ENCODE measurements at regions of chr15 and their contacts with region 1.

Region 1: GRCh38 chr15:78540141-78540928 is at the start of gene PSMA4:
- DNase-seq: peak; percentile 86 to 98 (median 95)
- ATAC-seq: peak; percentile 83
- H3K4me3 ChIP-seq: peak within 1 kb of the TSS; percentile 85 to 96
- H3K4me3 Mint-ChIP-seq: peak within 1 kb of the TSS; percentile 88
- H3K27ac ChIP-seq: peak within 1 kb of the TSS; percentile 89 to 97
- H3K27ac Mint-ChIP-seq: peak within 1 kb of the TSS; percentile 95
- H3K4me1 ChIP-seq: peaks cover 28% of the 10 kb centered on the region
- H3K4me1 Mint-ChIP-seq: peaks cover 31% of the 10 kb centered on the region
- H3K27me3 ChIP-seq: no peaks in the 10 kb centered on the region
- H3K27me3 Mint-ChIP-seq: no peaks in the 10 kb centered on the region
- CTCF ChIP-seq: no peak
- total RNA-seq, gene PSMA4: 72.8 to 79.4 TPM

Region 2: GRCh38 chr15:78299101-78299930 is 241.0 kb before region 1 on chr15 and contains the start of gene SKIC8:
- CTCF ChIA-PET with region 1: no interaction called
- POLR2A ChIA-PET with region 1: interaction called, 3 read pairs
- intact Hi-C with region 1: loop called (anchors 1 to 2 kb)
- DNase-seq: peak; percentile 80 to 95 (median 89)
- ATAC-seq: peak; percentile 98
- H3K4me3 ChIP-seq: peak within 1 kb of the TSS; percentile 89 to 99
- H3K4me3 Mint-ChIP-seq: peak within 1 kb of the TSS; percentile 98
- H3K27ac ChIP-seq: peak within 1 kb of the TSS; percentile 73 to 84
- H3K27ac Mint-ChIP-seq: peak within 1 kb of the TSS; percentile 96
- H3K4me1 ChIP-seq: peaks cover 12% of the 10 kb centered on the region
- H3K4me1 Mint-ChIP-seq: peaks cover 34% of the 10 kb centered on the region
- H3K27me3 ChIP-seq: no peaks in the 10 kb centered on the region
- H3K27me3 Mint-ChIP-seq: no peaks in the 10 kb centered on the region
- CTCF ChIP-seq: no peak
- total RNA-seq, gene SKIC8: 18.4 to 21.2 TPM

Region 3: DNA sequence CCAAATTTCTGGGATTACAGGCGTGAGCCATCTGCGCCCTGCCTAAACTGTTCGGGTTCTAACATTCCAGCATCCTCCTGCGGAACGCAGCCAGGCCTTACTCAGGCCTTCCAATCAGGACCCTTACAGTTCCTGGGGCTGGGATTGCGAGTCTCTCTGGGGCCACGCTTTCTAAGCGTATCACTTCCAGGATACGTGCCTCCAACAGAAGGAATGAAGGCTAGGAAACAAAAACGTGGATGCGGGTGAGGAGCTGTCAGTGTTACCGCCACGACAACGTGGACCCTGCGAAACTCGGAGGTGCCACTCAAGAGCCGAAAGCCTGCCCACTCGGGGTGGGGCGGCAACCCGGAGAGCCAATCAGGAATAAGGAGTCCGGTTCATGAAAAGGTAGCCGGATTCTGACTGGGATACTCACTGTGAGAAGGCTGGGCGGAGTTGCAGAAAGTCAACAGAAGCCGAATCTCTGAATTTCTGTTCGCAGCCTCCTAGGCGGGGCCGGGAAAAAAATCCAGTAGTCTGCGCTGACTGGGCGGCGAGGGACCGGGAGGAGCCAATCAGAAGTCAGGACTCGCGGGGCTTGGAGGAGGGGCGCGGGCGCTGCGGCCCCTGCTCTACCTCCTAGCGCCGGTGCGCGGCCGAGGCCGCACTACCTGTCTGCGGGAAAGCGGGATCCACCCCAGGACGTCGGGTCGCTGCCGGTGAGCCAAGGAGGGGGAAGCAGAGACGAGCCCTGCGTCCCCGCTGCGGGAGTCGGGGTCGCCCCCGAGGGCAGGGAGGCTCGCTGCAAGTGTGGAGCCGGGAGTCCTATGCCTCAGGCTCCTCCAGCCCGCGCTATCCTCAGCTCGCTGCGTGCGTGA is 33.1 kb before region 1 on chr15 and contains the start of gene HYKK:
- CTCF ChIA-PET with region 1: no interaction called
- POLR2A ChIA-PET with region 1: interaction called, 16 read pairs
- intact Hi-C with region 1: loop called (anchors 1 kb)
- DNase-seq: peak; percentile 18 to 82 (median 69)
- ATAC-seq: peak; percentile 89
- H3K4me3 ChIP-seq: peak within 1 kb of the TSS; percentile 60 to 70
- H3K4me3 Mint-ChIP-seq: peak within 1 kb of the TSS; percentile 88
- H3K27ac ChIP-seq: no peak within 1 kb of the TSS
- H3K27ac Mint-ChIP-seq: peak within 1 kb of the TSS; percentile 55
- H3K4me1 ChIP-seq: peaks cover 15% of the 10 kb centered on the region
- H3K4me1 Mint-ChIP-seq: peaks cover 29% of the 10 kb centered on the region
- H3K27me3 ChIP-seq: peaks cover 0 to 3% of the 10 kb centered on the region in 2 experiments
- H3K27me3 Mint-ChIP-seq: no peaks in the 10 kb centered on the region
- CTCF ChIP-seq: no peak
- total RNA-seq, gene HYKK: 1.6 to 2.3 TPM

Region 4: DNA sequence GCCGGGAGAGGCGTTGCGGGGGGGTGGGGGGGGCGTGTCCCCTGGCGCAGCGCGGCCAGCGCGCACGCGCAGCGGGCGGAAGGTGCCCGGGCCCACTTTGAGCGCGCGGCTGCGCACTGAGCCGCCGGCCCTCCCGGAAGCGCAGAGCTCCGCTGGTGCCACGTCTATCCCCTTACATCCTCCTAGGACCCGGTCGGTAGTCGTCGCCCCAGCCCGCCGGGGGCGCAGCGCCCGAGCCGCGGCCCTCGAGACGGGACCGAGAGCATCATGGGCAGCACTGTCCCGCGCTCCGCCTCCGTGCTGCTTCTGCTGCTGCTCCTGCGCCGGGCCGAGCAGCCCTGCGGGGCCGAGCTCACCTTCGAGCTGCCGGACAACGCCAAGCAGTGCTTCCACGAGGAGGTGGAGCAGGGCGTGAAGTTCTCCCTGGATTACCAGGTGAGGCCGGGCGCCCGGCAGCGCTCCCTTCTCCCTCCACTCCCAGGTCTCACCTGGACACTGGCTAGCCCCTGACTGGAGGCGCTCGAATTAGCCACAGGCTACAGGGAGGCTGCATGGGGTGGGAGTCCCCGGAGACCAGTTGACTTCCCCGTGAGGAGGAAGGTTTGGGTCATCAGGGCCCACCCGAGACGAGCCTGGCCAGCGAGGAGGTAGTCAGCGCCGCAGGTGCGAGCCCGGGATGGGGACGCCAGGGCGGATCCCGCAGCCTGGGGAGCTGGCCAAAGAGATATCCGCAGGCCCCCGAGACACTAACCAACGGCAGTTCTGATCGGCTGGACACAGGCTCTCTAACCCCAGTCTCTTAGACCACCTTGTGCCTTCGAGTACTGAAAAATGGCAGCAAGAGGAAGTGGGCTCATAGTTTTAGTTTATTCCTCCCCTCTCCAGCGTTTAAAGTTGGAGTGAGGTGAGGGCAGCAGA is 770.9 kb after region 1 on chr15 and contains the start of gene TMED3:
- CTCF ChIA-PET with region 1: no interaction called
- POLR2A ChIA-PET with region 1: no interaction called
- intact Hi-C with region 1: loop called in 1 of 2 experiments (anchors 10 kb)
- DNase-seq: peak; percentile 56 to 92 (median 75)
- ATAC-seq: peak; percentile 95
- H3K4me3 ChIP-seq: peak within 1 kb of the TSS; percentile 83 to 88
- H3K4me3 Mint-ChIP-seq: peak within 1 kb of the TSS; percentile 89
- H3K27ac ChIP-seq: peak within 1 kb of the TSS in 1 of 2 experiments; percentile 47
- H3K27ac Mint-ChIP-seq: peak within 1 kb of the TSS; percentile 22
- H3K4me1 ChIP-seq: peaks cover 19% of the 10 kb centered on the region
- H3K4me1 Mint-ChIP-seq: peaks cover 49% of the 10 kb centered on the region
- H3K27me3 ChIP-seq: no peaks in the 10 kb centered on the region
- H3K27me3 Mint-ChIP-seq: no peaks in the 10 kb centered on the region
- CTCF ChIP-seq: no peak
- total RNA-seq, gene TMED3: 14.2 to 16.0 TPM

Measured in CD8-positive, alpha-beta T cell (primary cell).